ENCODE measurements at regions of chr4 and their contacts with region 1.

Region 1: GRCh38 chr4:159446266-159446976 is 343.5 kb downstream of the RAPGEF2 start:
- DNase-seq: peak in 8 of 10 donors; percentile 37 to 88 (median 40)

Region 2: DNA sequence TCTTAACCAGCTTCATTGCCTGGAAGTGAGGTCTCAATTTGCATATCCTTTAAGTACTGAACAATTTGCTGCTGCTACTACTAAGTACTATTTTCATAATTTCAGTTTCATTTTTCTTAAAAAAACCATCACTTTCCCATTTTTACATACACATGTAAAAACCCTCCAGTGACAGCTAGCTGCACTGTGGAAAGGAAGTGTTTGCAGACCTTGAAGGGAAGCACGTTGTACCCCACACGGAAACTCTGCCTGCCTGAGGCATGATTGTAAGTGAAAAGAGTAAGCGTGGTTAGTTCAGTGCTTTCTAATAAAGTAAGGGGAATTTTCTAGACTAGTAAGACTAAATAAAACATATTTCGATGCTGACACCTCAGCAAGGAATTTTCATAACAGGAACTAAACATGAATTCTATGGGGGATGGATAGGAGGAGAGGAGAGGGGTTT is 240.0 kb before region 1 on chr4:
- intact Hi-C with region 1: loop called (anchors 10 kb)
- DNase-seq: no peak

Region 3: DNA sequence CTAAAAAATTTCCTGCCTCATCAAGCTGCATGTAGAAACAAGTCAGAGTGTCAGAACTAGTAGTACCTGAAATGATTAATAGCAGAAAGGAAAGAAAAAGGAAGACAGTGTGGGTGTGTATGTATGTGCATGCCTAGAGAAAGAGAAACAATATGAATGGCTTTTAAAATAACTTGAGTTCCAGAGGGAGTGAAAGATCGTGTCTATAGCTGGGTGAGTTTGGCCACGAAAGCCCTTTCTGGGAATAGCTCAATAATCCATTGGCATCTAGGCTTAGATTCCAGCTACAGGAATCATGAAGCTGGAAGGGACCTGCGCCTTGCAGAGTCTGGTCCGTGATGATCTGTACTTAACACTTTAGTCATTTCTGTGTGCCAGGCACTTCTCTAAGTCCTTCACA is 147.9 kb before region 1 on chr4:
- intact Hi-C with region 1: no loop called
- DNase-seq: no peak